ENCODE measurements at regions of chr1 and their contacts with region 1.

Region 1: GRCh38 chr1:15994590-15995351 is 9.3 kb upstream of the SRARP start:
- DNase-seq: peak in 1 of 2 donors; percentile 57
- ATAC-seq: peak; percentile 94

Region 2: GRCh38 chr1:15816674-15817073 is 178.1 kb before region 1 on chr1:
- intact Hi-C with region 1: loop called in 1 of 2 experiments (anchors 5 kb)
- DNase-seq: no peak
- ATAC-seq: no peak